ENCODE measurements at regions of chr5 and their contacts with region 1.

Region 1: GRCh38 chr5:149731639-149732323 is 1.7 kb downstream of the PPARGC1B start:
- DNase-seq: peak; percentile 39 to 85 (median 72)
- ATAC-seq: peak; percentile 53
- H3K4me3 ChIP-seq: peak overlapping the region; percentile 91 to 98
- H3K4me3 Mint-ChIP-seq: peak overlapping the region; percentile 88
- H3K27ac ChIP-seq: peak overlapping the region in 1 of 2 experiments; percentile 70
- H3K27ac Mint-ChIP-seq: peak overlapping the region; percentile 82
- H3K4me1 ChIP-seq: peaks cover 8% of the 10 kb centered on the region
- H3K4me1 Mint-ChIP-seq: peaks cover 8% of the 10 kb centered on the region
- H3K27me3 ChIP-seq: no peaks in the 10 kb centered on the region
- H3K27me3 Mint-ChIP-seq: no peaks in the 10 kb centered on the region
- CTCF ChIP-seq: no peak

Region 2: DNA sequence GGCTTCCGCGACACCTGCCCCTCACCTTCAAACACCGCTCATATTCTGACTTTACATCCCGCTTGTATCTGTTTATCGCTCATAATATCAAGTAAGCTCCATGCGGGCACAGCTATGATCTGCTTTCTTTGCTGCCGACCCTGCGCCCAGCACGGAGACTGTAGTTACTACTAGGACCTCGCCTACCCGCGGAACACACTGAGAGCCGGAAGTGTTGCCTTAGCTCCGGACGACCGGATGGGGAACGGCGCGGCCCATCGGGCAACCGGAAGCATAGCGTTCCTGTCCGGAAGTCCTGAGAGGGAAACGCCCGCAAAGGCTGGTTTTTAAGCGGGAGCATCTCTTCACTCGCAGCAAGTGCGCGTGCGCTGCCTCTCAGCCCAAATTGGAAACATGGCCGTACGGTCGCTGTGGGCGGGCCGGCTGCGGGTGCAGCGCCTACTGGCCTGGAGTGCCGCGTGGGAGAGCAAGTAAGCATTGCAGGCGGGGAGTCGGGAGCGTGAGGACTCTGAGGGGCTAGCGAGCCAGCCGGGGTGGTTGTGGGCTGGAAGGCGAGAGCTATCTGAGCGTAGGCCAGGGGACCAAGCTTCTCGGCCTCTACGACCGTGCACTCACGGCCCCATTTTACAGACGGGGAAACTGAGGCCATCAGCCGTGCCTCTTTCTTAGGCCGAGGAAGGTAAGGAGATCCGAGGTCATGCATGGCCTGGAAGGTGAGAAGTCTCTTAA is 386.5 kb before region 1 on chr5 and contains the start of gene GRPEL2:
- CTCF ChIA-PET with region 1: no interaction called
- POLR2A ChIA-PET with region 1: no interaction called
- intact Hi-C with region 1: loop called (anchors 1 to 10 kb)
- DNase-seq: peak; percentile 65 to 93 (median 84)
- ATAC-seq: peak; percentile 65
- H3K4me3 ChIP-seq: peak within 1 kb of the TSS; percentile 94 to 95
- H3K4me3 Mint-ChIP-seq: peak within 1 kb of the TSS; percentile 92
- H3K27ac ChIP-seq: peak within 1 kb of the TSS; percentile 63 to 88
- H3K27ac Mint-ChIP-seq: peak within 1 kb of the TSS; percentile 90
- H3K4me1 ChIP-seq: peaks cover 53% of the 10 kb centered on the region
- H3K4me1 Mint-ChIP-seq: peaks cover 60% of the 10 kb centered on the region
- H3K27me3 ChIP-seq: no peaks in the 10 kb centered on the region
- H3K27me3 Mint-ChIP-seq: no peaks in the 10 kb centered on the region
- CTCF ChIP-seq: no peak
- total RNA-seq, gene GRPEL2: 9.1 to 9.7 TPM

Region 3: GRCh38 chr5:149551200-149552037 is 180.4 kb before region 1 on chr5 and contains the start of gene CSNK1A1:
- CTCF ChIA-PET with region 1: no interaction called
- POLR2A ChIA-PET with region 1: no interaction called
- intact Hi-C with region 1: loop called in 1 of 2 experiments (anchors 5 kb)
- DNase-seq: peak; percentile 98 to 100 (median 99)
- ATAC-seq: peak; percentile 85
- H3K4me3 ChIP-seq: peak within 1 kb of the TSS; percentile 90 to 94
- H3K4me3 Mint-ChIP-seq: peak within 1 kb of the TSS; percentile 97
- H3K27ac ChIP-seq: peak within 1 kb of the TSS; percentile 88 to 92
- H3K27ac Mint-ChIP-seq: peak within 1 kb of the TSS; percentile 95
- H3K4me1 ChIP-seq: peaks cover 27% of the 10 kb centered on the region
- H3K4me1 Mint-ChIP-seq: peaks cover 30% of the 10 kb centered on the region
- H3K27me3 ChIP-seq: no peaks in the 10 kb centered on the region
- H3K27me3 Mint-ChIP-seq: no peaks in the 10 kb centered on the region
- CTCF ChIP-seq: peak; percentile 62
- total RNA-seq, gene CSNK1A1: 213 to 221 TPM

Region 4: DNA sequence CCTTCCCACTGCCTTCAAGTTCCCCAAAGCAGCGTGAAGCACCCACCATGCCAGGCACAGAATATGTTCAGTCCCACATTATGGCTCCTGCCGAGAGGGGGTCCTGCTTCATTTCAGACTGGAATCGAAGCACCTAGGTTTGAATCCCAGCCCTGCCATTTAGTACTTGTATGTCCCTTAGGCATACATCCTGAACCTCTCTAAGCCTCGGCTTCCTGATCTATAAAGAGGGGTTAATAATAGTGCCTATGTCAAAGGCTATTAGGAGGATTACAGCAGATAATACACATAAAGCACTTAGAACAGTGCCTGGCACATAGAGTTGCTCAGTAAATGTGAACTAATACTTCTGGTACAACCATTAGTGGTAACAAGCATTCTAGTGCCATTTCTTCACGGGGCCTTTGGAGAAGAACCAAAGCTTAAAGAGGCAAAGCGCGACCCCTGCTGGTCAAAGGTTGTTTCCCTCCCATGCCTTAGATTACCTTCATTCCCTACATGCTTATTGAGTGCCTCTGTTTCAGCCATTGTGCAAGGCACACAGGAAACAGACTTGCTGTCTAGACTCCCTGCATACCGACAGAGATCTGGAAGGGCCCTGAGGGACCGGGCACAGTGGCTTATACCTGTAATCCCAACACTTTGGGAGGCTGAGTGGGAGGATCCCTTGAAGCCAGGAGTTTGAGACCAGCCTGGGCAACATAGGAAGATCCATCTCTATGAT is 96.5 kb after region 1 on chr5:
- CTCF ChIA-PET with region 1: no interaction called
- POLR2A ChIA-PET with region 1: no interaction called
- intact Hi-C with region 1: loop called in 1 of 2 experiments (anchors 1 kb)
- DNase-seq: peak; percentile 65 to 90 (median 80)
- ATAC-seq: peak; percentile 79
- H3K4me3 ChIP-seq: no peak overlapping the region
- H3K4me3 Mint-ChIP-seq: no peak overlapping the region
- H3K27ac ChIP-seq: no peak overlapping the region
- H3K27ac Mint-ChIP-seq: no peak overlapping the region
- H3K4me1 ChIP-seq: no peaks in the 10 kb centered on the region
- H3K4me1 Mint-ChIP-seq: peaks cover 2% of the 10 kb centered on the region
- H3K27me3 ChIP-seq: no peaks in the 10 kb centered on the region
- H3K27me3 Mint-ChIP-seq: no peaks in the 10 kb centered on the region
- CTCF ChIP-seq: peak; percentile 84

Region 5: DNA sequence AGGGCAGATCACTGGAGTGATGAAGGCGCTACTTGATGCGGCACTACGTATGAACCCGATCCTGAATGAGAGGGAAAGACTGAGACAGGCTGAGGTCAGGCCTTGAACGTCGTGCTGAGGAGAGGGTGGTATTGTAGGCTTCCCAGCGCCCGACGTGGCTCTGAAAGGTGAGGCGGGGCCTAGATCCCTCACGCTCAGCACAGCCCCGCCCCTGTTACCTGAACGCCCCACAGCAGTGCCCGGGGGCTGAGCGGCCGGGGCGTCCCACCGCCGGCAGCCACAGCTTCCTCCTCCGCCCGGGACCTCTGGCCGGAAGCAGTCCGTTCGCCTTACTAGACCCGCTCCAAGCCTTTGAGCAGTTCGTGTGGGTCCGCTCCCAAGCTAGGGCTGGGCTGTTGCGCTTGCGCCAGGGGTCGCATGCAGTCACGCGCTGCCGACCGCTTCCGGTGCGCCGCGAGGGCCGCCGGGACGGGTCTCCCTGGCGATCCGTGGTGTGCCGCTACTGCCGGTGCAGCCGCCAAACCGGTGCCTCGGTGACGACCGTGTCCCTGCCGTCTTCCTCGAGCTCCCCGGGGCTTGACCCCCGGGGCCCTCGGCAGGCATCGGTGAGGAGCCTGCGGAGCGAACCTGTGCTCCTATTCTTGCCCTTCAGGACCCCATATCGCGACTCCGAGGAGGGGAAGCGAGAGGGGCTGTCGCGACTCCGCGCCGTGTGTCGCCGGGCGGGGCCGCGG is 268.6 kb after region 1 on chr5 and contains the starts of genes HMGXB3 and TIGD6:
- CTCF ChIA-PET with region 1: no interaction called
- POLR2A ChIA-PET with region 1: interaction called, 3 read pairs
- intact Hi-C with region 1: loop called (anchors 1 to 2 kb)
- DNase-seq: peak; percentile 67 to 92 (median 83)
- ATAC-seq: peak; percentile 84
- H3K4me3 ChIP-seq: peak within 1 kb of the TSS; percentile 73 to 79
- H3K4me3 Mint-ChIP-seq: peak within 1 kb of the TSS; percentile 89
- H3K27ac ChIP-seq: peak within 1 kb of the TSS; percentile 75 to 80
- H3K27ac Mint-ChIP-seq: peak within 1 kb of the TSS; percentile 91
- H3K4me1 ChIP-seq: peaks cover 22% of the 10 kb centered on the region
- H3K4me1 Mint-ChIP-seq: peaks cover 39% of the 10 kb centered on the region
- H3K27me3 ChIP-seq: no peaks in the 10 kb centered on the region
- H3K27me3 Mint-ChIP-seq: no peaks in the 10 kb centered on the region
- CTCF ChIP-seq: no peak
- total RNA-seq, gene HMGXB3: 27.4 to 29.7 TPM
- total RNA-seq, gene TIGD6: 0.97 to 1.5 TPM

Region 6: DNA sequence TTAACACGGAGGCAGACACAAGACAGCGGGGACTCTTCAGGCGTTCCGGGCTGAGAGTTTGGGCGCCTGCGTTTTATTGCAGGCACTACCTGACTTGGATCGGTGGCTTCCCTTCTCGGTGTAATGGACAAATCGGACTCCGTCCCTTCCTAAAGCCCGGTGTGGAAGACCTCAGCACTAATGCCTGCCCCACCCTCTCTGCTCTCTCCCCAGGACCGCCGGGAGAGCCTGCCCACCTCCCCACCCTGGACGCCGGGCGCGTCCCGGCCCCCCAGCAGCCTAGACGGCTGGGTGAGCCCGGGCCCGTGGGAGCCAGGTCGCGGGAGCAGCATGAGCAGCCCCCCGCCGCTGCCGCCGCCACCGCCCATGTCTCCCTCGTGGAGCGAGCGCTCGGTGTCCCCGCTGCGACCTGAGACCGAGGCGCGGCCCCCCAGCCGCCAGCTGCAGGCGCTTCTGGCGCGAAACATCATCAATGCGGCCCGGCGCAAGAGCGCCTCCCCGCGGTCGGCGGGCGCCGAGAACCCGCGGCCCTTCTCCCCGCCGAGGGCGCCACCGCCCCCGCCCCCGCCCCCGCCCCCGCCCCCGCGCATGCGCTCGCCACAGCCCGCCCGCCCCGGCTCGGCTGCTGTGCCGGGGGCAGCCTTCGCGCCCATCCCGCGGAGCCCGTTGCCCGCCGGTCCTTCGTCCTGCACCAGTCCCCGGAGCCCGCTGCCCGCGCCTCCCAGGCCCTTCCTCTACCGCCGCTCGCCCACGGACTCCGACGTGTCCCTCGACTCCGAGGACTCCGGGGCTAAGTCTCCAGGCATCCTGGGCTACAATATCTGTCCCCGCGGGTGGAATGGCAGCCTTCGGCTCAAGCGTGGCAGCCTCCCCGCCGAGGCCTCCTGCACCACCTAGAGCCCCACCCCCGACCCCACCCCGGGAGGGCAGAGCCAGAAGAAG is 924.7 kb after region 1 on chr5:
- CTCF ChIA-PET with region 1: no interaction called
- POLR2A ChIA-PET with region 1: no interaction called
- intact Hi-C with region 1: loop called in 1 of 2 experiments (anchors 5 kb)
- DNase-seq: peak; percentile 61 to 90 (median 80)
- ATAC-seq: peak; percentile 93
- H3K4me3 ChIP-seq: peak overlapping the region; percentile 51 to 63
- H3K4me3 Mint-ChIP-seq: peak overlapping the region; percentile 78
- H3K27ac ChIP-seq: no peak overlapping the region
- H3K27ac Mint-ChIP-seq: no peak overlapping the region
- H3K4me1 ChIP-seq: peaks cover 6% of the 10 kb centered on the region
- H3K4me1 Mint-ChIP-seq: peaks cover 4% of the 10 kb centered on the region
- H3K27me3 ChIP-seq: no peaks in the 10 kb centered on the region
- H3K27me3 Mint-ChIP-seq: no peaks in the 10 kb centered on the region
- CTCF ChIP-seq: peak; percentile 53